ENCODE measurements at regions of chr2 and their contacts with region 1.

Region 1: DNA sequence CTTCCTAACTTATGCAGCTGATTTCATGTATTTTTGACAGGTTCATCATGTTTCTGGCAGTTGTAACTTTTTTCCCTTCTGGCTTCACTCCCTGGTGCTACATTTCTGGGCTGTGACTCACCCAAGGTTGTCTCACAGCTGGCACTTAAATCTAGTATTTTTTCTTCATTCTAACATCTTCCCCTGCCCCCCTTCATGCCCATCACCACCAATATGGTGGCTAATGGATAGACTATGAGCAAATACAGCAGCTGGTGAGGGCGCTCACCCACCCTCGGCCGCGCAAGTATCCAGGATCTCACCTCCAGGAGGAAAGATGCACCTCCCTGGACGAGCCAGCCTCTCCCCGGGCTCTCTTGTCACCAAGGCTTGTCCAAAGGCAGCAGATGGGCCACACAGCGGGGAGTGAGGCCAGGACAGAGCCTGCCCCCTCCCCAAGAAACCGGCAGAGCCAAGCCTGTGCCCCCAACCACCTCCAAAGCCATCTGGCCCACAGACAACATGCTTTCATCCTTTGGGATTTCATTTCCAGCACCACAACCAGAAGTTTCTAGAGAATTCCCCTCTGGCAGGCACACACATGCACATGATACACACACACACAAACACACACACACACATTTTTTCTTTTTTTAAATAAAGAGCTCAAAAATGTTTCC is 39.1 kb downstream of the ATOH8 start:
- DNase-seq: no peak
- H3K4me3 ChIP-seq: no peak overlapping the region
- H3K27ac ChIP-seq: no peak overlapping the region
- H3K4me1 ChIP-seq: no peaks in the 10 kb centered on the region; a peak in 1 of 7 replicates
- H3K27me3 ChIP-seq: no peaks in the 10 kb centered on the region; a peak in 1 of 7 replicates
- CTCF ChIP-seq: no peak
- EP300 ChIP-seq: no peak
- POLR2A ChIP-seq: no peak
- RAD21 ChIP-seq: no peak

Region 2: GRCh38 chr2:85682378-85682777 is 110.5 kb before region 1 on chr2:
- CTCF ChIA-PET with region 1: no interaction called
- POLR2A ChIA-PET with region 1: no interaction called
- DNase-seq: no peak
- H3K4me3 ChIP-seq: no peak overlapping the region
- H3K27ac ChIP-seq: no peak overlapping the region
- H3K4me1 ChIP-seq: peaks cover 0 to 7% (median 1%) of the 10 kb centered on the region in 4 experiments; a peak in 1 of 7 replicates
- H3K27me3 ChIP-seq: no peaks in the 10 kb centered on the region; a peak in 1 of 7 replicates
- CTCF ChIP-seq: no peak
- EP300 ChIP-seq: no peak
- POLR2A ChIP-seq: no peak
- RAD21 ChIP-seq: no peak

Region 3: DNA sequence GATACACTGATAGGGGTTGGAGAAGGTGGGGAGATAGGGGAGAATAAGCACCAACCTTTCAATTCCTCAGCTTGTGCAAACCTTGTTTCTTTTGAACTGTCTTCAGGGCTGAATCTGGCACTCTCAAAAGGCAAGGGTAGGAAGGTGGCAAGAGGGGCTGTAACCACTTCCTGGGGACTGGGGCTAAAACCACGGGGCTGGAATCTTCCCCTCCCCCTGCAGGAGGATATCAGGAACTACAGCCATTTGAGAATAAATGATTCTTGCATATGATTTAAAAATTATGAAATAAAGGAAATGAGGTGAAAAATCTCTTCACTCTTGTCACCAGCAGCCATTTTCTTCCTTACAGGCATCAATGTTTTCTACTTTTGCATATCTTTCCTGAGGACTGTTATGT is 11.7 kb after region 1 on chr2:
- CTCF ChIA-PET with region 1: interaction called, 17 read pairs
- POLR2A ChIA-PET with region 1: no interaction called
- DNase-seq: no peak
- H3K4me3 ChIP-seq: no peak overlapping the region
- H3K27ac ChIP-seq: no peak overlapping the region
- H3K4me1 ChIP-seq: no peaks in the 10 kb centered on the region
- H3K27me3 ChIP-seq: peaks cover 0 to 2% (median 0%) of the 10 kb centered on the region in 4 experiments; a peak in 1 of 7 replicates
- CTCF ChIP-seq: peak; percentile 51 to 61 (median 59)
- EP300 ChIP-seq: no peak
- POLR2A ChIP-seq: no peak
- RAD21 ChIP-seq: peak; percentile 62

Region 4: DNA sequence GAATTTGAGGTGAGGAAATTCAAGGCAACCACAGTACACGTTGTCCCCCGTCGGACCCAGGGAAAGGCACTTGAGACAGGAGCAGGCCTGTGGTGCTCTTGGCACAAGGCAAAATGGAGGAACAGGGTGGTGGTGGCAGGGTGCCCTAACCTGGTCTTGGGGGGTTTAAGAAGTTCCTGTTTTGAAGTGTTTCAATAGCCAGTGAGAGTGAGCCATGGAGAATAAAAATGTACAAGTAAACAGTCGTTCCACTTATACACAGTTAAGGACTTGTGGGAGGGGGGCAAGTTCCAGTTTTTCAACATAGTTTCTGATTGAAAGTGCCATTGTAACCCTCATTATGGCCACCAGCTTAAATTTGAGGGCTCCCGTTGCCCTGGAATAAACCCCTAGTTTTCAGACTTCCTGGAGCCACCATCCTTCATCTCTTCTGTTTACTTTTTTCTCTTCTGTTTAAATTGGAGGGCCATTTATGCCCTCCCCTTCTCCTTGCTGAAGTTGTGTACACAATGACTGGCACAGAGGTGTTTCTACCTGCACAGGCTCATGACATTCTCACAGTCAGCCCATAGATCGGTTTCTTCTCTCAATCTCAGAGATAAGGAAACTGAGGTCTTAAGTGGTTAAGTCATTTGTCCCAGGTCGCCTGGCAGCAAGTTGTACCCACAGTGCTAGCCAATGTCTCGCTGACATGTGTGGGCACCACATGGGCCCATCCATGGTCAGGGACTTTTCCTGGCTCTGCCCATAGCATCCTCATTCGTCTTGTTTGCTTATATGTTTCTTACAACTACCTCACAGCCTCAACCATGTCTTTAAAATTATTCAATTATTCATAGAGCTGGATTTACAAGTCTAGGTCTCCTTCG is 161.9 kb after region 1 on chr2:
- CTCF ChIA-PET with region 1: no interaction called
- POLR2A ChIA-PET with region 1: no interaction called
- DNase-seq: no peak
- H3K4me3 ChIP-seq: no peak overlapping the region
- H3K27ac ChIP-seq: no peak overlapping the region
- H3K4me1 ChIP-seq: peaks cover 0 to 7% (median 5%) of the 10 kb centered on the region in 4 experiments; a peak in 3 of 7 replicates
- H3K27me3 ChIP-seq: no peaks in the 10 kb centered on the region
- CTCF ChIP-seq: no peak
- EP300 ChIP-seq: no peak
- POLR2A ChIP-seq: no peak
- RAD21 ChIP-seq: no peak

Measured in H1 (cell line).